ENCODE measurements at regions of chr19 and their contacts with region 1.

Region 1: DNA sequence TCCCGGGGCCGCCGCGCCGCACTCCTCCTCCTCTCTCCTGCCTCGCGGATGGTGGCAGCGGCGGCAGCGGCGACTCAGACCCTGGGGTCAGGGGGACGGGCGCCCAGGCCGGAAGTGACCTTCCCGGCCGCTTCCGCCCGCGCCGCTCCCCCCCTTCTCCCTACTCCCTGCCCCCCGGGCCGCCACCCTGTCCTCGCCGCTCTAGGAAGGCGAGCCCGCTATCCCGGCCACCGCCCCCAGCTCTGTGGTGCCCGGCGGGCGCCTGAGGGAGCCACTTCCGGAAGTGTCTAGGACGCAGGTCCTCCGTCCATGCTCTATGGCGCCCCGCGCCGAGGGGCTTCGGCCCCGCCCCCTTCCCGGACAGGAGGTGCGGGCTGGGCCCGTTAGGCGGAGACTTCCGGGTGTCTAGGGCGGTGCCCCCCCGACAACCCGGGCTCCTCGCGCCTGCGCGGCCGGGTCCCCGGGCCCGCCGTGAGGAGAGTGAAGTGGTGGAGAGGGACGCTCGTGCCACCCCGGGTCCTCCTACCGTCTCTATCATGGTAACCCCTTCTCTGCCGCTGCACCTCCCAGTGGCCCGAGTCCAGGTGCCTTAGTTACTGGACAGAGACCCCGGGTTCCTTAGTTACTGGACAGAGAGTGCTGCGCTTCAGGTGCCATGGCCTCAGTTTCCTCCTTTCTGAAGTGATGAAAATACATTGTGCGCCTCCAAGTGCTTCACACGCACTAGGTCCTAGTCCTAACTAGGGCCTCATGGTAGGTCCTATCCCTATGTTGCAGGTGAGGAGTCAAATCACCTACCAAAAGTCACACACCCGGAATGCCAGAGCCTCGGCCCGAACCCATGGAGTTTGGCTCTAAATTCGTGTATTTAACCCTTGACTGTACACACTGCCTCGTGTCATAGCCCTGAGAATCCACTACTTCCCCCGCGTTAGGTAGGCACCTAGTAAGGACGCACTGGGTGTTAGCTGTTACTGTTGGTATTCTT is at the start of gene ZNF787:
- DNase-seq: peak; percentile 93 to 100 (median 98)

Region 2: GRCh38 chr19:56140583-56141416 is 19.3 kb after region 1 on chr19 and contains the start of gene ZNF444:
- intact Hi-C with region 1: loop called (anchors 1 kb)
- DNase-seq: peak; percentile 97 to 100 (median 99)

Region 3: DNA sequence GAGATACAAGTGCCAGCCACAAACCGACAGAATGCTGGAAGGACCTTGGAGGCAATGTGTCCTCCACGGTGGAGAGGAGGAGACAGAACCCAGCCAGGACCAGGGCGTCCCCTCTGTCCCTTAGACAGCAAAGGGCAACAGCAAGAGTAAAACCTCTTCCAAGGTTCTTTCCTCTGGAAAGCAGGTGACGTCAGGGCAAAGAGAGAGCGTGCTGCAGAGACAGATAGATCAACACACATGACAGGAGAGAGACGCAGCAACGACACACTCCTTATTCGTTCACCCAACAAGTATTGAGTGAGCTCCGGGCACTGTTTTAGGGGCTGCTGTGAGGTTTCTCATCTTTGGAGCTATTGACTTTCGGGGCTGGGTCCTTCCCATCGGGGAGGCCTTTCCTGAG is 53.1 kb after region 1 on chr19:
- intact Hi-C with region 1: no loop called
- DNase-seq: peak in 11 of 42 donors; percentile 15 to 67 (median 32)

Region 4: GRCh38 chr19:56199686-56200085 is 78.2 kb after region 1 on chr19:
- intact Hi-C with region 1: no loop called
- DNase-seq: no peak

Region 5: DNA sequence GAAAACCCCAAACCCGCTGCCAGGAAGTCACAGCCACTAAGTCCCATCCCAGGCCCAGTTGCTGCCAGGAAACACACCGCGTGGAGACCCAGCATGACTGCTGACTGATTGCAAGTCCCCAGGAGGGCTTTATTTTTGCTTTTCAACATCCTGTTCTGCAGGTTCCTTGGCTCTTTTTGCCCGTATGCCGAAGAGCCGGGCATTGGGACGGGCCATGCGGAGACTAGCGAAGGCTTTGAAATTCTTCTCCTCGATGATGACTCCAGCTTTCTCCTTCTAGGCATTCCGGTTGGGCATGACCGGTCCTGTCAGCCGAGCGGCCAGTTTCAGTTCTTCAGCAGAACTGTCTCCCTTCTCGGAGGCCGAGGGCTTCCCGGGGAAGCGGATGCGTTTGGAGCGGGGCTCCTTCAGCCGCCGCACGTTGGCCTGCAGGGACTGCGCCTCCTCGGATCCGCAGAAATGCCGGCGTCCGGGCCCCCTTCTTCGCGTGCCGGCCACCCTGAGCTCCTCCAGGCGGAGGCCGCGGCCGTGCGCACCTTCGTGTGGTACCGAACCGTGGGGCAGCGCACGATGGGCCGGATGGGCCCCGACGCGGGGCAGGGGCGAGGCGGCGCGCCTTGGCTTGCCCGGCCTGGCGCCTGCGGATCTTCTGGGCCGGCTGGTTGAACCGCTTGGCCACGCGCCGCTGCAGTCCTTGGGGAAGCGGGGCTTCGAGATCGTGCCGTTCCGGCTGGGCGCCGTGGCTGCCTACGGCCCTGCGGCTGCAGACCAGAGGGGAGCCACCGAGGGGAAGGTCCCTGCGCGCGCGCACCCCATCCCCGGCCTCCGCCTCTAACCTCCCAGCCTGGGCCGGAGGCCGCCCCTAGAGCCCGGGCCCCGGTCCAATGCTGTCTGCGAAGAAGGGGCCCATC is 95.8 kb after region 1 on chr19:
- intact Hi-C with region 1: no loop called
- DNase-seq: peak in 12 of 42 donors; percentile 5 to 51 (median 12)